ENCODE measurements at regions of chr16 and their contacts with region 1.

Region 1: DNA sequence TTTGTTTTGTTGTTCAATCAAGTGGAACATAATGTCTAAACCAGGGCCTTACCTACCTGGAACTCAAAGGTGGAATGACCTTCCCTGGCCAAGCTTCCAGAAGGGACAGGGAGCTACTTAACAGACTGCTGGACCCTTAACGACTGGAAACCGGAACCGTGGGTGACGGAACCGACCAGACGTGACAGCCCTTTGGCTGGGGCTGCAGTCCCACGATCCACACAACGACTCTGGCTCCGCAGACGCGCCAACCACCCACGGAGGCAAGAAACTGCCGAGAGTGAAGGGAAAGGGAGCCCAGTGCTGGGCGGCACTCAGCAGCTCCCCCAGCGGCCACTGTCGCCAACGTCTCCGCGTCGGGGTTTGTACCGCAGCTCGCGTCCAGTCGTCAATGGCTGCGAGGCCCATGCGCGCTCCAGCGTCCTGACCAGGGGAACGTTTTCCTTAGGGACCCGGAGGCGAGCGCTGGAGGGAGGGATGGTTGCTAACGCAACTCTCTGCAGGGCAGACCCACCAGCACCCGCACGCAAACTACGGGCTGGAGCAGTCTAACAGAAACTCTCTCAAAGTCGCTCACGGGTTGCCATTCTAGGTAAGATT is 5.5 kb upstream of the KIF22 start:
- DNase-seq: peak; percentile 74 to 86
- ATAC-seq: peak; percentile 75 to 95 (median 88)
- H3K4me3 ChIP-seq: peak overlapping the region in 8 of 10 donors; percentile 15 to 38 (median 32)
- H3K27ac ChIP-seq: peak overlapping the region in 2 of 10 donors; percentile 13 to 46
- H3K4me1 ChIP-seq: peaks cover 4 to 21% (median 13%) of the 10 kb centered on the region in 9 donors
- H3K27me3 ChIP-seq: peaks cover 0 to 12% (median 0%) of the 10 kb centered on the region in 7 donors
- CTCF ChIP-seq: peak; percentile 74 to 91 (median 88)

Region 2: DNA sequence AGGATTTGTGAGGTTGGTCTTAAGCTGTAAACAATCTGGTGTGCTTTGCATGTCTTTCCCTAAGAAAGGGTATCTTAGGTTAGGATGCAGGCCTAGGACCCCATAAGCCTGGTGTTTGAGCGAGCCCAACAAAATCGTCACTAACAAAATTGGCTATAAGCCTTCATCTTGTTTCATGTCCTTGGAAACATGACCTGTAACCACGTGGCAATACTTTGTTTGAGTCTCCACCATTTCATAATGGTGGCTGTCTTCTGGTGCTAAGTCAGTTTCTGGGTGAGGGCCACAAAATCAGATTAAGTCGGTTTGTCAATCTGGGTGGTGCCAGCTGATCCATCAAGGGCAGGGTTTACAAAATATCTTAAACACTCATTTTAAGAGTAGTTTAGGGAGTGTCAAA is 72.2 kb before region 1 on chr16:
- intact Hi-C with region 1: no loop called
- DNase-seq: no peak
- ATAC-seq: no peak
- H3K4me3 ChIP-seq: no peak overlapping the region
- H3K27ac ChIP-seq: no peak overlapping the region
- H3K4me1 ChIP-seq: peaks cover 0 to 22% (median 0%) of the 10 kb centered on the region in 9 donors
- H3K27me3 ChIP-seq: no peaks in the 10 kb centered on the region
- CTCF ChIP-seq: no peak

Region 3: GRCh38 chr16:29729116-29729521 is 55.9 kb before region 1 on chr16:
- intact Hi-C with region 1: loop called in 1 of 10 experiments (anchors 10 kb)
- DNase-seq: peak in 1 of 2 donors; percentile 14
- ATAC-seq: peak in 6 of 8 donors; percentile 41 to 67 (median 56)
- H3K4me3 ChIP-seq: peak overlapping the region in 1 of 10 donors; percentile 19
- H3K27ac ChIP-seq: no peak overlapping the region
- H3K4me1 ChIP-seq: peaks cover 0 to 8% (median 0%) of the 10 kb centered on the region in 9 donors
- H3K27me3 ChIP-seq: peaks cover 0 to 7% (median 0%) of the 10 kb centered on the region in 7 donors
- CTCF ChIP-seq: peak; percentile 15 to 65 (median 57)

Measured in heart right ventricle (tissue), 16 donors.